Natural killer cell (primary cell): ENCODE measurements at regions of chr12 and their contacts with region 1.

Region 1: DNA sequence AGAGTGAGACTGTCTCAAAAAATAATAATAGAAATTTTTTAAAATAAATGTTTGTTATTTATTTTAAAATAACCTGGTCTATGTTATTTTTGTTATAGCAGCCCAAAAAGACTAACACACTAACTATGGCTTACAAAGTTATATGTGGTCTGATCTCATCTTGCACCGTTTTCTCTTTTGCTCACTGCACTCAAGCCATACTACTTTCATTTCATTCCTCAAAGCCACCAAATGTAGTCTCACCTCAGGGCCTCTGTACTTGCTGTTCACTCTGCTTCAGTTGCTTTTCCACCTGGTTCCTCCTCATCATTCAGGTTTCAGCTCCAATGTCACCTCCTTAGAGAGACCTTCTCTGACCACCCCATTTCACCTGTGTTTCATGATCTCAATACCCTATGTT is 55.2 kb upstream of the MDM1 start:
- DNase-seq: no peak
- ATAC-seq: peak; percentile 50 to 65 (median 64)
- H3K4me3 ChIP-seq: no peak overlapping the region
- H3K4me3 Mint-ChIP-seq: peak overlapping the region; percentile 2
- H3K27ac ChIP-seq: no peak overlapping the region
- H3K27ac Mint-ChIP-seq: peak overlapping the region; percentile 1 to 59
- H3K4me1 ChIP-seq: peaks cover 5% of the 10 kb centered on the region
- H3K4me1 Mint-ChIP-seq: peaks cover 38 to 49% of the 10 kb centered on the region in 2 donors
- H3K27me3 ChIP-seq: no peaks in the 10 kb centered on the region
- H3K27me3 Mint-ChIP-seq: no peaks in the 10 kb centered on the region
- CTCF ChIP-seq: no peak

Region 2: DNA sequence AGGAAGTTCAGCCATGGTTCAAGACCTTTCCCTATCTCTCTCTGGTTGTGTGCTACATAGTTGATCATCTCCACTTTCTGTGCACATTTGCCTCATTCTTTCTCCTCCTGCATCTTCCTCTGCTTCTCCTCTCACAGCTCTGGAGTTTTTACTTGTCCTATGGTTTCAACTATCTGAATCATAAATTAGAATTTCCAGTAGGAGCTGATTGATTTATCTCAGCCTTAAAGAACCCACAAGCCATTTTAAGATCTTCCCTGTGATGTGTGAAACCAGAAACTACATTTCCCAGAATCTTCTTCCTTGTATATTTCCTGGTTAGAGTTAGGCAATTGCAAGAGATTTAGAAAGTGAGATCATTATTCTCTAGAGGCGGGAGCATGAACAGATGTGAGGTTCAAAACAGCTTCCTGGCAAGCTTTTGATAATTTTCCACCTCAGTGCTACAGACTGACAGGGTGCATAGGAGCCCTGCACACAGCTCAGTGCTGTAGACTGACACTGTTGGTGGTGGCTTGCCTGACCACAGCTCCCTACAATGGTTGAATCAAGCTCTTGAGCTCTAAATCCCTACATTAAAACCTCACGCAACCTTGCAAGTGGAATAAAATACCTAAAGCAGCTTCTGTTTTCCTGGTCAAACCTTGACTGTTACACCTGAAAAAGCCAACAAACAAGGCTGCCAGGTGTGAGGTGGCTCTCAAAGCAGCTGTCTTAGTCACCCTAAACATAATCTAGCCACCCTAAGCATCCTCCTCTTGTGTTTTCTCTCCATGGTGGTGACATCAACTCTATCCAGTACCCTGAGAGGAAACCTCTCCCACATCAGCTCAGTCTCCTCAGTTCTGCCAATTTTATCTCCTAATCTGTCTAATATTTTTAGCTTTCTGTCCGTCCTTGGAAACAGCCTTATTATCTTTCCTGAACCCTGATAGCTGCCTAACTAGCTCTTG is 206.3 kb before region 1 on chr12:
- intact Hi-C with region 1: no loop called
- DNase-seq: peak in 1 of 2 donors; percentile 76
- ATAC-seq: peak; percentile 79 to 90 (median 89)
- H3K4me3 ChIP-seq: no peak overlapping the region
- H3K4me3 Mint-ChIP-seq: no peak overlapping the region
- H3K27ac ChIP-seq: peak overlapping the region; percentile 15
- H3K27ac Mint-ChIP-seq: peak overlapping the region; percentile 35 to 45
- H3K4me1 ChIP-seq: peaks cover 21% of the 10 kb centered on the region
- H3K4me1 Mint-ChIP-seq: peaks cover 19 to 22% of the 10 kb centered on the region in 2 donors
- H3K27me3 ChIP-seq: no peaks in the 10 kb centered on the region
- H3K27me3 Mint-ChIP-seq: peaks cover 0 to 3% of the 10 kb centered on the region in 2 donors
- CTCF ChIP-seq: no peak

Region 3: DNA sequence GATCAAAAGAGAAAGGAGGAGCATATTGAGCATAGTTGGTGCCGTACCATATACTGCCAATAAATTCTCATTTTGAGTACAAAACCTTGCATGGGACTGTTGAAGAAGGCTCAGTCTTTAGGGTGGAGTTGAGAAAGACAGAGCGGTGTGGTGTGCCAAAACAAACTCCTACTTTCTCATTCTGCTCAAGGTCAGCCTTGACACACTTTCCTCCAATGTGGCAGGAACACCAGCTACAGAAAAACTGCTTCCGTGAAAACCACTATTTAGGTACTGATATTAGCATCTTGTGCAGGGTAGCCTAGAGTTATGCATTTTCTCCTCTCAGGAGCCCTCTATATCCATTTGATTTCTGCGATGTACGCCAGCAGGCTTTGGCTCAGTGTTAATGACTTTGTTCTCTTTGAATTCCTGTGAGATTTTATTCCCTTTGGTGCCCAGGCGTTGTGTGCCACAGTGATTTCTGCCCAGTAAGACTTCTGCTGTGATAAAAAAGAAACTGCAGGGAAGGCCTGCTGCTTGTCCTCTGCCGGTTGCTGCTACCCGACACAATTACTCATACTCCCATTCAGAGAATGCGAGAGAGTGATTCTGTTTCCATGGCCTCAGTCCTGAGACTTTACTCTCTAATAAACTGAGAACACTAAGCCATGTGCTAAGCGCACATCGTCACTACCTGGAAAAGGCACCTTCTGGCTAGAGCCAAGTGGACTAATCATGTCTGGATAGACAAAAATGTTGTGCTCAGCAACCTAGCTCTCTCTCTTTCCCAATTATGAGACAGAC is 33.1 kb after region 1 on chr12:
- intact Hi-C with region 1: loop called (anchors 5 kb)
- DNase-seq: peak in 1 of 2 donors; percentile 15
- ATAC-seq: peak; percentile 40 to 56 (median 40)
- H3K4me3 ChIP-seq: no peak overlapping the region
- H3K4me3 Mint-ChIP-seq: peak overlapping the region; percentile 78
- H3K27ac ChIP-seq: peak overlapping the region; percentile 75
- H3K27ac Mint-ChIP-seq: peak overlapping the region; percentile 88 to 91
- H3K4me1 ChIP-seq: peaks cover 57% of the 10 kb centered on the region
- H3K4me1 Mint-ChIP-seq: peaks cover 69 to 77% of the 10 kb centered on the region in 2 donors
- H3K27me3 ChIP-seq: no peaks in the 10 kb centered on the region
- H3K27me3 Mint-ChIP-seq: no peaks in the 10 kb centered on the region
- CTCF ChIP-seq: no peak

Region 4: GRCh38 chr12:69173368-69173767 is 786.0 kb after region 1 on chr12:
- intact Hi-C with region 1: no loop called
- DNase-seq: no peak
- ATAC-seq: no peak
- H3K4me3 ChIP-seq: no peak overlapping the region
- H3K4me3 Mint-ChIP-seq: no peak overlapping the region
- H3K27ac ChIP-seq: no peak overlapping the region
- H3K27ac Mint-ChIP-seq: no peak overlapping the region
- H3K4me1 ChIP-seq: no peaks in the 10 kb centered on the region
- H3K4me1 Mint-ChIP-seq: no peaks in the 10 kb centered on the region
- H3K27me3 ChIP-seq: no peaks in the 10 kb centered on the region
- H3K27me3 Mint-ChIP-seq: peaks cover 0 to 7% of the 10 kb centered on the region in 2 donors
- CTCF ChIP-seq: no peak